ENCODE measurements at regions of chr9 and their contacts with region 1.

Region 1: DNA sequence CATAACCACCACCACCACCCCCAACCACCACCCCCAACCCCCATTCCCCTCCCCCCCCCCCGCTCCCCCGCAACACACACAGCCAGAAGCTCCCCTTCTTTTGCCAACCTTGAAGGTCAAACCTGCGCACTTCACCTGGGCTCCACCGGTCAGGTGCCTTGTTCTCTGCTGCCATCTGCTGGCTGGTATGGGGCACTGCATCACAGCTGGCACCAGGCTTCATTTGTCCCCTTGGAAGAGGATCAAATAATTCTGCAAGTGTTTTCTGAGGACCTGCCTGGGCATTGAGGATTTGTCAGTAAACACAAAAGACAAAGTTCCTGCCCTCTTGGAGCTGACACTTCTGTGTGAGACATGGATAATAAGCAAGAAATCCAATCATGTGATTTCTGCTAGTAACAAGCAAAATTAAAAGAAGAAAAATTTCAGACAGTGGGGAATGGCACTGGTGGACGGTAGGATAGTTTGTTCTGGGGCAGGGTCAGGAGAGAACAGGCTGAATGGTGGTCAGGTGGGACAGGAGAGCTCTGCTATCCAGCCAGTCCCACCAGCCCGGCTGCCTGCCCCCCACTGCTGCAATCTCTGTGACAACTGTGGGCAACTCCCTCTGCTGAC is 55.6 kb upstream of the LMX1B start:
- DNase-seq: peak; percentile 38
- H3K4me3 Mint-ChIP-seq: no peak overlapping the region
- H3K27ac Mint-ChIP-seq: no peak overlapping the region
- H3K4me1 Mint-ChIP-seq: no peaks in the 10 kb centered on the region
- H3K27me3 Mint-ChIP-seq: peaks cover 29% of the 10 kb centered on the region

Region 2: DNA sequence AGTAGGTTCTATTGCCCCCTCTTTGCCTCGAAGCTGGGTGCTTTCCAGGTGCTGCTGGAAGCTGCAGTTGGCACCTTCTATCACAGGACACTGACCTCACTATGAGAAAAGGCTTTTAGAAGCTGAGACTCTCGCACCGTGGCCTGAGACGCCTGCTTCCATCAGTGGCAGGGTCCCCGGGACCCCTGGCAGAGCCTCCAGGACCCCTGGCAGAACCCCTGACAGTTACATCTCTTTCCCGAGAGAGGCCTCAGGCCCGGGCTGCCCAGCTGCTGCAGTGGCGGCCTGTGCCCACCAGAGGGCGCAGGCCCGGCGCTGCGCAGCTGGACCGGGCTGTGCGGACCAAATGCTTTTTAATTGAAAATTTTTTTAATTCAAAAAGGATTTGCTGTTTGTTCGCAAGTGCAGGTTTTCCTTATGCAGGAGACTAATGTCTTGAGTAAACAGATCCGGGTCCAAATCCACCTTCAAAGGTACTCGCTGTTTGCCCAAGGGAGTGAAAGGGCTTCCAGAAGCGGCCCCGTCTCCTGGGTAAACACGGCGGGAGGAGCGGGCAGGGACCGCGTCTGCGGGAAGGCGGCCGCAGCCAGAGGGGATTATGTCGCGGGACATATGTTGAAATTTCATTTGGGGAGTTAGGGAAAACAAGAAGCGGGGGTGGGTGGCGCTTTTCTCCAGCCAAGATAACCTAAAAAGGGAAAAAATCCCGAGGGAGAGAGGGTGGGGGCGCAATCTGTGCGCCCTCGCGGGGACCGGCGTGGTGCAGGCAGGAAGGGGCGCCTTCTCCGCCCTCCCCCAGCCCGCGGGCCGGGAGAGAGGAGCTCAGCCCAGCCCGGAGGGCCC is 58.9 kb before region 1 on chr9:
- intact Hi-C with region 1: loop called (anchors 1 kb)
- DNase-seq: peak; percentile 24
- H3K4me3 Mint-ChIP-seq: peak overlapping the region; percentile 10
- H3K27ac Mint-ChIP-seq: no peak overlapping the region
- H3K4me1 Mint-ChIP-seq: peaks cover 2% of the 10 kb centered on the region
- H3K27me3 Mint-ChIP-seq: peaks cover 34% of the 10 kb centered on the region

Measured in activated T-helper 2 cell treated with anti-CD3 and anti-CD28 coated beads, Interferon-gamma antibody, Interleukin-2, Interleukin-4, amounts not matched to agents 10 μg/mL and 5 μg/mL and 100 μg/mL, durations not matched to agents 14 hours and 24 hours and 36 hours (primary cell).